Activated naive CD8-positive, alpha-beta T cell treated with anti-CD3 and anti-CD28 coated beads, Interleukin-2, amount 10 ng/mL, durations not matched to agents 7 days and 5 days (primary cell): ENCODE measurements at regions of chr11 and their contacts with region 1.

Region 1: DNA sequence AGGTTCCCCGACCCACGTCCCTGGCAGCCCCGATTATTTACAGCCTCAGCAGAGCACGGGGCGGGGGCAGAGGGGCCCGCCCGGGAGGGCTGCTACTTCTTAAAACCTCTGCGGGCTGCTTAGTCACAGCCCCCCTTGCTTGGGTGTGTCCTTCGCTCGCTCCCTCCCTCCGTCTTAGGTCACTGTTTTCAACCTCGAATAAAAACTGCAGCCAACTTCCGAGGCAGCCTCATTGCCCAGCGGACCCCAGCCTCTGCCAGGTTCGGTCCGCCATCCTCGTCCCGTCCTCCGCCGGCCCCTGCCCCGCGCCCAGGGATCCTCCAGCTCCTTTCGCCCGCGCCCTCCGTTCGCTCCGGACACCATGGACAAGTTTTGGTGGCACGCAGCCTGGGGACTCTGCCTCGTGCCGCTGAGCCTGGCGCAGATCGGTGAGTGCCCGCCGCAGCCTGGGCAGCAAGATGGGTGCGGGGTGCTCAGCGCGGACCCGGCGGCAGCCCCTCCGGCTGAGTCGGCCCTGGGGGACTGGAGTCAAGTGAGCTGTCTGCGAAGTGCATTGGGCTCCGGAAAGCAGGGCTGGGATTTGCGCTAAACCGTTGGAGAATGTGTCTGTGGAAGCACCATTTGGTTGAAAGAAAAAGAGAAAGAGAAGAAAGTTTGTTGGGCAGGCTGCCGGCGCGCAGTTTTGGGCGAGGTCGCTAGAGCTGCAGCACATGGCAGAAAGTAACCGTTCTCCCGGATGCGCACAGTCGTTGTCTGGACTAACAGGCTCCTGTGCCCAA is at the start of gene CD44:
- DNase-seq: peak; percentile 70
- ATAC-seq: peak; percentile 69
- H3K4me3 Mint-ChIP-seq: peak within 1 kb of the TSS; percentile 93
- H3K27ac Mint-ChIP-seq: peak within 1 kb of the TSS; percentile 84
- H3K4me1 Mint-ChIP-seq: peaks cover 47% of the 10 kb centered on the region
- H3K27me3 Mint-ChIP-seq: no peaks in the 10 kb centered on the region
- total RNA-seq, gene CD44: 551 to 555 TPM

Region 2: DNA sequence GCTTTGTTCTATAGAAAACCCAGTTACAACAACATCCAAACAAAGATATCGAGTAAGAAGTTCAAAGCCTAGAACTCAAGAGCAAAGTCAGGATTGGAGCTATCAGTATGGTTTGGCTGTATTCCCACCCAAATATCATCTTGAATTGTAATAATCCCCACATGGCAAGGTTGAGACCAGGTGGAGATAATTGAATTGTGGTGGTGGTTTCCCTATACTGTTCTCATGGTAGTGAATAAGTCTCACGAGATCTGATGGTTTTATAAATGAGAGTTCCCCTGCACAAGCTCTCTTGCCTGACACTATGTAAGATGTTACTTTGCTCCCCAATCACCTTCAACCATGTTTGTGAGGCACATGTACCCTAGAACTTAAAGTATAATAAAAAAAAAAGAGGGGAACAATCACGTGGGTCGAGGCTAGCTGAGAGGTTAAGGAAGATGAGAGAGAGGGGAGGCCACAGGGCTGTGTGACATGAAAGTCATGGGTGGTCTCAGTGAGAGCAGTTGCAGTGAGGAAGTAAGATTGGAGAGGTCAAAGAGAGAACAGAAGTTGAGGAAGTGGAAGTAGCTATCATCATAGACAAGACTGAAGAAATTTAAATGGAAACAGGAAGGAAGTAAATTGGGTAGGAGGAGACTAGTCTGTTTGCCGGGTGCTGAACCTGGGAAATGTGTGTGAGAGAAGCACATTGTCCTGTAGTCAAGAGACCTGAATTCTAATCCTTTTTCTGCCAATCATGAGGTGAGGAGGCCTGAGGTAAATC is 80.3 kb before region 1 on chr11:
- POLR2A ChIA-PET with region 1: interaction called, 15 read pairs
- DNase-seq: no peak
- ATAC-seq: peak; percentile 42
- H3K4me3 Mint-ChIP-seq: peak overlapping the region; percentile 21
- H3K27ac Mint-ChIP-seq: peak overlapping the region; percentile 82
- H3K4me1 Mint-ChIP-seq: peaks cover 30% of the 10 kb centered on the region
- H3K27me3 Mint-ChIP-seq: no peaks in the 10 kb centered on the region

Region 3: GRCh38 chr11:35126000-35126878 is 12.9 kb before region 1 on chr11:
- POLR2A ChIA-PET with region 1: interaction called, 10 read pairs
- DNase-seq: peak; percentile 39
- ATAC-seq: peak; percentile 65
- H3K4me3 Mint-ChIP-seq: peak overlapping the region; percentile 69
- H3K27ac Mint-ChIP-seq: peak overlapping the region; percentile 87
- H3K4me1 Mint-ChIP-seq: peaks cover 44% of the 10 kb centered on the region
- H3K27me3 Mint-ChIP-seq: peaks cover 2% of the 10 kb centered on the region

Region 4: DNA sequence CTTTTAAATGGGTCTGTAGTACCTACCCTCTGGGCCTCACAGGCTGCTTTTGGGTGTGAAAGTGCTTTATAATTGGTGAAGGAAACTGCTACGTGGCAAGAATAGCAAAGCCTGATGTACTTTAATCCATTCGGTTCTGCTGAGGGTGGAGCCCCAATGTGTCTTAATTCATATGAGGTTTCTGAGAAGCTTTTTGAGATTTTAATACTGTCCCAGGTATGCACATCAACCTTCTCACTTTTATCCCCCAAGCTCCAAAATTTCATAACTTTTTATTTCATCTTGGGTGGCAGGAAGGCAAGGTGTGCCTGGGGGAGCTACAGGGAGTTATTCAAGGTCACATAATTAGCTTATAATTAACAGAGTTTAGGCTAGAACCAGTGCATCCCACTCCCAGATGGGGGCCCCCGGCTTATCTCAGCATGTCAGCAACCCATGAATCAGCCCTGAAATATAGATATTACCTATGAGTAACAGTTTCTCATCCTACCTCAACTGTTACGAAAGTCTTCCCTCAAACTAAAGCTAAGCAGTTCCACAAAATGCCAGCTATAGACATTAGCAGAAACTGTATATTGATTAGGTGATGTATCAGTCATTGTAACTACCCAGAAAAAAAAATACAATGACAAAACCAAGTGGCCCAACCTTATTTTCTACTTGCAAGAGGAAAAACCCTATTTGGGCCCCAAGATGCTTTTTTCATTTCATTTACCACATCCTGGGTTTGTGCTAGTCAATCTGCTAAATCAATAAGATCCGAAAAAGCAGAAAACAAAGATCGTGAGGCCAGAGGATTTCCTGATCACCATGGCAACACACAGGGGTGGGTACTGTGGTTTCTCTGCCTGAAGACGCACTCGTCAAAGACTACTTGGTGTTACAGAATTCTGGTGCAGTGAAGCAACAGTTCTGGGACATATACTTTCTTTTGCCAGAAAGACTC is 26.6 kb after region 1 on chr11:
- POLR2A ChIA-PET with region 1: interaction called, 87 read pairs
- DNase-seq: peak; percentile 79
- ATAC-seq: peak; percentile 68
- H3K4me3 Mint-ChIP-seq: peak overlapping the region; percentile 81
- H3K27ac Mint-ChIP-seq: peak overlapping the region; percentile 97
- H3K4me1 Mint-ChIP-seq: peaks cover 88% of the 10 kb centered on the region
- H3K27me3 Mint-ChIP-seq: no peaks in the 10 kb centered on the region